ENCODE measurements at regions of chr2 and their contacts with region 1.

Region 1: DNA sequence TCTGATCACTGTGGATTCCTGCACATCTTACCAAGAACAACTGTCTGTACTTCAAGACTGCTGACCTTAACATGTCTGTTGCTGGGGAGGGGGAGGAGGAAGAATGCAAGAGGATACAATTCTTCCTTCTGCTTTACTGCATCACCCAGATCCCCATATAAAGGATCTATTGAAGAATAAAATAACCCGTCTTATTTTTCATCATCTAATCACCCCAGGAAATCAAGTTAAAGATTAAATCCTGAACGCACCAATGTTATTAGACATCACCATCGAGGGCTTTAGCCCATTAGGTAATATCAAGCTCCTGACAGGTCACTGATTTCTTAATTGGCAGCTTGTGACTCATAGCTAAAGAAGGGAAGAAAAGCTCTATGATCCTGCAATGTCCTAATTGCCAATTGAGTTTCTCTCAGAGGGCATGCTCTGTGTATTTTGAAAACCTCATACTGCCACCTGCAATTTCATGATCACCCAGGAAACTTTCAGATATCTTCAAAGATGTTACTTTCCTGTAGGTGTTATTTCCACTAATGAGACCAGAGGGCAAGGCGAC is 75.4 kb upstream of the KCNE4 start:
- DNase-seq: no peak
- ATAC-seq: no peak
- H3K4me3 Mint-ChIP-seq: no peak overlapping the region
- H3K27ac Mint-ChIP-seq: no peak overlapping the region
- H3K4me1 Mint-ChIP-seq: no peaks in the 10 kb centered on the region
- H3K27me3 Mint-ChIP-seq: peaks cover 10% of the 10 kb centered on the region

Region 2: GRCh38 chr2:221958224-221958623 is 1018.4 kb before region 1 on chr2:
- CTCF ChIA-PET with region 1: no interaction called
- POLR2A ChIA-PET with region 1: no interaction called
- intact Hi-C with region 1: no loop called
- DNase-seq: no peak
- ATAC-seq: no peak
- H3K4me3 Mint-ChIP-seq: no peak overlapping the region
- H3K27ac Mint-ChIP-seq: no peak overlapping the region
- H3K4me1 Mint-ChIP-seq: no peaks in the 10 kb centered on the region
- H3K27me3 Mint-ChIP-seq: peaks cover 3% of the 10 kb centered on the region

Region 3: DNA sequence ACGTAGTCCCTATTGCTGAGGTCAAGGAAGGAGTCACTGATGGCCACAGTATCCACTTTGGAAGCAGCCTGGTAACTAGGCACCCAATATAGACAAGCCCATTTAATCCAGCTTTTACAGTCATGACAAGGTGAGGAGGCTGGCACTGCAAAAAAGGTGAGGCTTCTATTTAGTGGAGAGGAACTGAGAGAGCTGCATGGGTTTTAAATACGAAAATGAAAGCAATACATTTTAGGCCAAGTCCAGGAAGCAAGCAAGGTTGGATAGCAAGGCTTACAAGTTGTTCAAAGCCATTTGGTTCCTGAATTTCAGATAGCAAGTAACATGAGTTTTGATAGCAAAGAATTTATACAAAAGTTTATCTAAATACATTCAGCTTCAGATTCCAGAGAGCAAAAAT is 471.9 kb before region 1 on chr2:
- CTCF ChIA-PET with region 1: no interaction called
- POLR2A ChIA-PET with region 1: no interaction called
- intact Hi-C with region 1: no loop called
- DNase-seq: no peak
- ATAC-seq: no peak
- H3K4me3 Mint-ChIP-seq: no peak overlapping the region
- H3K27ac Mint-ChIP-seq: no peak overlapping the region
- H3K4me1 Mint-ChIP-seq: no peaks in the 10 kb centered on the region
- H3K27me3 Mint-ChIP-seq: peaks cover 2% of the 10 kb centered on the region

Region 4: GRCh38 chr2:223027442-223027841 is 50.8 kb after region 1 on chr2:
- CTCF ChIA-PET with region 1: no interaction called
- POLR2A ChIA-PET with region 1: no interaction called
- intact Hi-C with region 1: no loop called
- DNase-seq: no peak
- ATAC-seq: no peak
- H3K4me3 Mint-ChIP-seq: no peak overlapping the region
- H3K27ac Mint-ChIP-seq: no peak overlapping the region
- H3K4me1 Mint-ChIP-seq: no peaks in the 10 kb centered on the region
- H3K27me3 Mint-ChIP-seq: peaks cover 3% of the 10 kb centered on the region

Region 5: GRCh38 chr2:223101340-223102039 is 124.9 kb after region 1 on chr2:
- CTCF ChIA-PET with region 1: interaction called, 4 read pairs
- POLR2A ChIA-PET with region 1: no interaction called
- intact Hi-C with region 1: loop called (anchors 2 to 5 kb)
- DNase-seq: no peak
- ATAC-seq: no peak
- H3K4me3 Mint-ChIP-seq: no peak overlapping the region
- H3K27ac Mint-ChIP-seq: no peak overlapping the region
- H3K4me1 Mint-ChIP-seq: no peaks in the 10 kb centered on the region
- H3K27me3 Mint-ChIP-seq: peaks cover 3% of the 10 kb centered on the region

Region 6: DNA sequence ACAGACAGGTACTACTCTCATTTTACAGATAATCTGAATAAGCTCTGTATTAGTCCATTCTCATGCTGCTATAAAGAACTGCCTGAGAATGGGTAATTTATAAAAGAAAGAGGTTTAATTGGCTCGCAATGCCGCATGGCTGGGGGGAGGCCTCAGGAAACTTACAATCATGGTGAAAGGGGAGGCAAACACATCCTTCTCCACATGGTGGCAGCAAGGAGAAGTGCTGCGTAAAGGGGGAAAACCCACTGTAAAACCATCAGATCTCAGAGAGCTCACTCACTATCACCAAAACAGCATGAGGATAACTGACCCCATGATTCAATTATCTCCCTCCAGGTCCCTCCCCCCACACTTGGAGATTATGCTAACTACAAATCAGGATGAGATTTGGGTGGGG is 329.8 kb after region 1 on chr2:
- CTCF ChIA-PET with region 1: no interaction called
- POLR2A ChIA-PET with region 1: no interaction called
- intact Hi-C with region 1: loop called in 1 of 2 experiments (anchors 10 kb)
- DNase-seq: peak; percentile 11
- ATAC-seq: no peak
- H3K4me3 Mint-ChIP-seq: no peak overlapping the region
- H3K27ac Mint-ChIP-seq: no peak overlapping the region
- H3K4me1 Mint-ChIP-seq: no peaks in the 10 kb centered on the region
- H3K27me3 Mint-ChIP-seq: no peaks in the 10 kb centered on the region

Region 7: GRCh38 chr2:223528036-223528435 is 551.4 kb after region 1 on chr2:
- CTCF ChIA-PET with region 1: no interaction called
- POLR2A ChIA-PET with region 1: no interaction called
- intact Hi-C with region 1: loop called in 1 of 2 experiments (anchors 10 kb)
- DNase-seq: no peak
- ATAC-seq: no peak
- H3K4me3 Mint-ChIP-seq: no peak overlapping the region
- H3K27ac Mint-ChIP-seq: no peak overlapping the region
- H3K4me1 Mint-ChIP-seq: no peaks in the 10 kb centered on the region
- H3K27me3 Mint-ChIP-seq: no peaks in the 10 kb centered on the region

Region 8: DNA sequence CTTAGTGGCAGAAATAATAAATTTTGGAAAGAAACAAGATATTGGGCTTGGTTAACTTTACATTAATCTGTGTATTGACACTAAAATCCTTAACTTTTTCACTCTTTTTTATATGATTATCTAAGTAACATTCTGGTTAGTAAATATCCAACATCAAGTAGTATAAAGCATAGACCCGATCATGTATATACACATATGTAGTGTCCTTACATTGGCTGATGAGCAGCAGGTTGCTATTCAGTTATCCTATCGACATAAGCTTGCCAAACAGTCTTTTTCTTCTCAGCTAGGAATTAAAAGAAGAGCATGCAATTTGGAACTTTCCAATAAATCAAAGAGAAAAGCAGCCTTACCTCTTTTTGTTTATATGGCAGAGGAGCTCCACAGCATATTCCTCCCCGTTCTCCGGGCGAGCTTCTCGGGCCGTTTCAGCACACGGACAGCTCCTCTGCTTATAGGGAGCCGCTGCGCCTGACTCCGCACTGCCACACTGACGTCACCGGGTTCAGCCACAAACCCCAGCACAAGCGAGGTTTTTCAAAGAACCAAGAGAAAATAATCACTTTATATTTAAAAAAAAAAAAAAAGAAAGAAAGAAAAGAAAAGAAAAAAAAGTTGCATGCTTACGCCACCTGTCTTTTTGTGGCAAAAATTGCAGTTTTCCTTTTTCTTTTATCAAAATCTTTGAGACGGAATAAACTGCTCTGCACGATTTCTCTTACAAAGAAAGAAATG is 625.5 kb after region 1 on chr2 and contains the start of gene SCG2:
- CTCF ChIA-PET with region 1: no interaction called
- POLR2A ChIA-PET with region 1: no interaction called
- intact Hi-C with region 1: loop called in 1 of 2 experiments (anchors 10 kb)
- DNase-seq: peak; percentile 71
- ATAC-seq: peak; percentile 68
- H3K4me3 Mint-ChIP-seq: no peak within 1 kb of the TSS
- H3K27ac Mint-ChIP-seq: no peak within 1 kb of the TSS
- H3K4me1 Mint-ChIP-seq: no peaks in the 10 kb centered on the region
- H3K27me3 Mint-ChIP-seq: peaks cover 5% of the 10 kb centered on the region
- total RNA-seq, gene SCG2: not detected

Region 9: GRCh38 chr2:223692191-223692947 is 715.8 kb after region 1 on chr2:
- CTCF ChIA-PET with region 1: no interaction called
- POLR2A ChIA-PET with region 1: no interaction called
- intact Hi-C with region 1: loop called in 1 of 2 experiments (anchors 10 kb)
- DNase-seq: peak; percentile 24
- ATAC-seq: no peak
- H3K4me3 Mint-ChIP-seq: no peak overlapping the region
- H3K27ac Mint-ChIP-seq: no peak overlapping the region
- H3K4me1 Mint-ChIP-seq: peaks cover 4% of the 10 kb centered on the region
- H3K27me3 Mint-ChIP-seq: peaks cover 11% of the 10 kb centered on the region

Measured in activated CD4-positive, alpha-beta T cell treated with anti-CD3 and anti-CD28 coated beads for 36 hours (primary cell).